Cardiac septum (tissue), 1 donor: ENCODE measurements at regions of chr12 and their contacts with region 1.

Region 1: GRCh38 chr12:124694846-124695497 is 127.6 kb upstream of the NCOR2 start:
- DNase-seq: no peak

Region 2: DNA sequence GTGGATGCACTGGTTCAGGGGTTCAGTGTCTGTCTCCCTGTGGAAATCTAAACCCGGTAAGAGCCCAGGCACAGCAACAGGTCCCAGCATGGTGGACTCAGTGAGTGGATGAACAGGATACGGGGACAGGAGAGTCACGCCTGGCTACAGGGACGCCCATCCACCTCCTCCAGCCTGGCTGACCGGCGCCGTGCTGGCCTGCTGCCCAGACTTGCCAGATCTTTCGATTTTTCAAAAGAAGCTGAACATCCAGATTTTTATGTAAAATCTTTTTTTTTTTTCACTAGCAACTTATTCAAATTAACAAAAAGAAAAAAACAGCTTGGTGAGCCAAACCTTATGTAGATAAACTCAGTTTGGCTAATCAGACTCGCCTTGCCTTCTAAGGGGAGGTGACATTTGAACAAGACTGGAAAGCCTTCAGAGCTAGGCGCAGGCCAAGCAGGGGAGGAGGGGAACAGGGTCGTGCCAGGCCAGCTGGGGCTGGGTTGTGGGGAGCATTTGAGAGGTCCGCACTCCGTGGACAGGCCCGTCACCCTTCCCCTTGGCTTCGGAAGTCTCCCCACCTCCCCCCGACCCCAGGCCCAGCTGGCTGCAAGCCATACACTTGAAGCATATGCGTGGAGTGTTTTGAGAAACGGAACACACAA is 39.8 kb before region 1 on chr12:
- intact Hi-C with region 1: no loop called
- DNase-seq: peak; percentile 84

Region 3: GRCh38 chr12:124680863-124681778 is 13.9 kb before region 1 on chr12:
- intact Hi-C with region 1: no loop called
- DNase-seq: no peak

Region 4: GRCh38 chr12:124745891-124746570 is 51.1 kb after region 1 on chr12:
- intact Hi-C with region 1: loop called (anchors 5 kb)
- DNase-seq: peak; percentile 95

Region 5: DNA sequence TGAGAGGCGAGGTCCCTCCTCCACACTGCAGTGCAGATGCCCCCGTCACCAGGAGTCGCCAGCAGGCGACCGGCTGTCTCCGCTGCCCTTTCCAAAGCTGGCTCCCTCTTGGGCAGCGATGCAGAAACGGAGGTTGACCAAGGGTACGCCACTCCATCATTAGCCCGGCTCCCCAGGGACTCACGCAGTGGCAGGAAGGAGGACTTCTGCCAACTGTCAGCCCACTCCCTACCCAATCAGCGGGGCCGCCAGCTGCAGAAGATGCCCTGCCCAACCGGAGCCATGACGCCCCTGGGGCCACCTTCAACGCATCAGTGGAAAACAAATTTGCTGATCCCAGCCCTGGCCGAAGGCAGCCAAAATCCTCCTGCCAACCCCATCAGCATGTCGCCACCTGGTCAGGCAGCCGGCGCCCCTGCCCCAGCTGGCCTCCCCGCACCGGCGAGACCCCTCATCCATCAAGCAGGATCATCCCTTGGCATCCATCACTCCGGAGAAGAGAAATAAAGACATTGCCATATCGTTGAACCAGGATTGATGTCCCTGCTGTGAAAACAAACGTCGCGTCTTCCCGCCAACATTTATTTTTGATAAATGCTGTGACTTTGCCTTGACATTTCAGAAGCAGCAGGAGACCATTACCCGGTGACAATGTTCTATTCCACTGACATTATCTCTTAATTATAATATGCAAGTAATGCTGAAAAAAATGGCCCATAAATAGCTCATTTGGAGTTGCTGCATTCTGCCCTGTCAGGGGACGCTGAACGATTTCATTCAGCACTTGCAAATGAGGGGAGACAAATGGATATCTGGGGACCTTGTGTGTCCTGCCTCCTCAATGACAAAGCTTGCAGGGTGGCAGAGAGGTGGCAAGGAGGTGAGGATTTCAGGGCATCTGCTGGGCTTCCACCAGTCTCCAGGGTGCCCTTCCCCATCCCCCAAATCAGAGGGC is 63.6 kb after region 1 on chr12:
- intact Hi-C with region 1: no loop called
- DNase-seq: no peak